Activated CD4-positive, alpha-beta T cell treated with anti-CD3 and anti-CD28 coated beads, Interleukin-2, amount 10 ng/mL, durations not matched to agents 24 days and 14 days (primary cell): ENCODE measurements at regions of chr6 and their contacts with region 1.

Region 1: DNA sequence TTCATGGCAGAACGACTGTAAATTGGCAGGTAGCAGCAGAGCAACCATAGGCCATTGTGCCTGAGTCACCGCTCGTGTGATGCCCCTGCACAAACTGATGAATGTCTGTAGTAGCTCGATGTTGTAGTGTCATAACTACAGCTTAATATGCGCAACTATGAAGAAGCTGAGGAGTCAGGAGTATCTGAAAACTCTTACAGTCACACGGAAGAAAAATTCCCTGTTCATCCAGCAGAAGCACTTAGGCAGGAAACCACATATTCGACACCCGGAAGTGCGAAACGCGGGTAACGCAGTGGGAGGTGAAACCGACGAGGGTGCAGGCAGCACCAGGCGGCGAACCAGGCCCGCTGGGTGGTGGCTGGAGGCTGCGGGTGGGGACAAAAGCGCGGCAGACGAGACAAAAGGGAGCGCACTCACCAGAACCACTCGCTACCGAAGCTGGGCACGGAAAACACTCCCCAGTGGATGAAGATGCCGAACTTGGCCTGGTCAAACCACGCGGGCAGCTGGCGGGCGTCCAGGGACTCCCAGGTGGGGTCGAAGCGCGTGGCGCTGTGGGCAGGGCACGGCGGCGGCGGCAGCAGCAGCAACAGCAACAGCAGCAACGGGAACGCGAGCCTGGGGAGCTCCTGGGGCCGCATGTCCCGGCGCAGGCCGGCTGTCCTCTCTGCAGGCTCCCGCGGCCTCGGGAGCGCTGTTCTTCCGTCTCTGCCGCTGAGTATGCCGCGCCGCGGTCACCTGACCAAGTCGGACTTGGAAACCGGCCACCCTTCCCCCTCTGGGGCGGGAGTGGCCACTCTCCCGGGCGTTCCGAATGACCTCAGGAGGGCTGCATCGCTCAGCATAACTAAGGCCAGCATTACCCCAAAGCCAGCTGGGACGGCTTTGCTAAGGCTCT is at the start of gene FUCA2:
- DNase-seq: peak; percentile 92
- H3K4me3 Mint-ChIP-seq: peak within 1 kb of the TSS; percentile 97
- H3K27ac Mint-ChIP-seq: peak within 1 kb of the TSS; percentile 99
- H3K4me1 Mint-ChIP-seq: peaks cover 34% of the 10 kb centered on the region
- H3K27me3 Mint-ChIP-seq: no peaks in the 10 kb centered on the region
- total RNA-seq, gene FUCA2: 14.4 and 16.1 TPM in 2 replicates

Region 2: DNA sequence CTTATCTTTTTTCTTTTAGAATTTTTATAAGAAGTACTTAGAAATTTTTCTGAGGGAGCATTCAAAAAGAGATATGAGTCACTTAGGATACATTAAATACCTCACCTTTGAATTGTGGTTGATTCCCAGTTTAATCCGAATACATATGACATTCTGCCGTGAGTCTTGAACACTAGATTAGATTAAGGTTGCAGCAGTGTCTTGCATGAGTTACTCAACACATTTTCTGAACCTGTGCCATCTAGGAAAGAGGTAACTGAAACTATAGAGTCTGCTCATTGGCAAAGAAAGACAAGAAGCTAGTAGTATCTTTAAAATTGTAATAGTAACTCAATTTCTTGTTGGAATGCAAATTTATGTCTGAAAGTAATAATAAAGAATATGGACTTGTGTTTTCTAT is 45.7 kb before region 1 on chr6:
- intact Hi-C with region 1: no loop called
- DNase-seq: no peak
- H3K4me3 Mint-ChIP-seq: no peak overlapping the region
- H3K27ac Mint-ChIP-seq: no peak overlapping the region
- H3K4me1 Mint-ChIP-seq: peaks cover 2% of the 10 kb centered on the region
- H3K27me3 Mint-ChIP-seq: no peaks in the 10 kb centered on the region

Region 3: DNA sequence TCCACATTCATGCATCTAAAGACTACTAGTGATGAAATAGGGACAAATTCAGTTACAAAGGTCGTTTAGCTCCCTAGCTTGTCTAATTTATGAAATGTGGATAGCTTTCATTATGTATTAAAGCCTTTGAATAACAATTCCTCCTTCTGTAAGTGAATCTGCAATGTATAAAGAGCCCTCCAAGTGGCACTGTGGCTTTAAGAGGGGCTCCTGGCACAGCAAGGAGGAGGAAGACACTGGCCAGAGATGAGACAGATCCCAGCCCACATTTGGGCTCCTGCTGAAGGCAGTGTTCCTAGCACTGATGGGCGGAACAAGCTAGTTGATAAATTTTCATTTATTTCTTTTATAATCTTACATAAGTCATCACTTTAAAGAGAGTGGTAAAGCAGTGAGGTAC is 17.9 kb after region 1 on chr6:
- intact Hi-C with region 1: loop called (anchors 2 kb)
- DNase-seq: no peak
- H3K4me3 Mint-ChIP-seq: no peak overlapping the region
- H3K27ac Mint-ChIP-seq: no peak overlapping the region
- H3K4me1 Mint-ChIP-seq: peaks cover 13% of the 10 kb centered on the region
- H3K27me3 Mint-ChIP-seq: no peaks in the 10 kb centered on the region

Region 4: DNA sequence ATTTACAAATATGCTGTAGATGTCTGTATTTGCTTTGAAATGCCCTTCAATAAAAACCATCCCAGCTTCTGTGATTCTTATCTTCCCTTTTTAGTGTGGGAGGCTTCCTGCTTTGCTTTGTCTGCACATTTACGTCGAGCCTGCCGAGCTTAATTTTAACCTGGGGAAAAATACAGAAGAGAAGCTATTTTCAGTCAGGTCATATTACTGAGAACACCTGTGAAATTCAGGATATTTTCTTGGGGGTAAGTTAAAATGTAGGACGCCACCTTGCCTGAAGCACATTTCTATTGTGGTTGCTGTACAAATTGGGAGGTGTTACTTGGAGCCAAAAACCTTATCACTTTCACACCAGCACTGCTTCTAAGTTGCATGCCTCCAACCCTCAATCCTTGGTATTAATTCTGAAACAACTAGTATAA is 43.8 kb after region 1 on chr6:
- intact Hi-C with region 1: loop called (anchors 2 kb)
- DNase-seq: peak; percentile 58
- H3K4me3 Mint-ChIP-seq: peak overlapping the region; percentile 78
- H3K27ac Mint-ChIP-seq: peak overlapping the region; percentile 70
- H3K4me1 Mint-ChIP-seq: peaks cover 62% of the 10 kb centered on the region
- H3K27me3 Mint-ChIP-seq: no peaks in the 10 kb centered on the region